ENCODE measurements at regions of chr19 and their contacts with region 1.

Region 1: DNA sequence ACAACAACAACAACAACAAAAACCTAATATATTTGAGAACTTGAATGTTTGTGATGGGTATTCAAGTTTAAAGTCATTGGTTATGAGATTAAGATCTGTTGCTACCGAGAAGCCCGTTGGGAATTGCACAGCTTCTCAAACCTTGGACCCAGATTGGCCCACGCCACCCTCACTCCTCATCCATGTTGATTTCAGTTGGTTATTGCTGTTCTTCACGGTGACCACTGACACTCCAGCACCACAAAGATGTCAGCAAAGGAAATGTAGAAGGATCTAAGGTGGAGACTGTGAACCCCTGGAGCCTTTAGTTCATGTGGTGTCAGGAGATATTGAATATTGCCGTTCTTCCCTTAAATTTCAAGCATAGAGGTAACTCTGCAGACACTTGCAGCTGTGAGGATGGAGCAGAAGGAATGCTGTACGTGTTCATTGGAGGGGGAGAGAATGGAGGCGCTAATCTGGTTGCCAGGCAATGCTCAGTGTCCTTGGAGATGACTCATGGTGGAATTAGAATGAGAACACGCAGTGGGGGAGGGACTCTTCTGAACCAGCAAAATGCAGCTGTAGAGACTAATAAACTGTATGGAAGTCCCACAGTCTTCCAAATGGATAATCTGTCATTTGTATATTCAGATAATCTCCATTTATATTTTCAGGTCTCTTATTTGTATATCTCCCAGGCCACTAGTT is 20.8 kb upstream of the ZNF835 start:
- DNase-seq: peak in 9 of 10 donors; percentile 24 to 91 (median 69)
- H3K4me3 ChIP-seq: peak overlapping the region in 8 of 59 donors; percentile 1 to 22 (median 14)
- H3K27ac ChIP-seq: peak overlapping the region in 19 of 59 donors; percentile 3 to 92 (median 84)
- H3K27me3 ChIP-seq: no peaks in the 10 kb centered on the region
- CTCF ChIP-seq: peak in 14 of 56 donors; percentile 5 to 33 (median 18)

Region 2: DNA sequence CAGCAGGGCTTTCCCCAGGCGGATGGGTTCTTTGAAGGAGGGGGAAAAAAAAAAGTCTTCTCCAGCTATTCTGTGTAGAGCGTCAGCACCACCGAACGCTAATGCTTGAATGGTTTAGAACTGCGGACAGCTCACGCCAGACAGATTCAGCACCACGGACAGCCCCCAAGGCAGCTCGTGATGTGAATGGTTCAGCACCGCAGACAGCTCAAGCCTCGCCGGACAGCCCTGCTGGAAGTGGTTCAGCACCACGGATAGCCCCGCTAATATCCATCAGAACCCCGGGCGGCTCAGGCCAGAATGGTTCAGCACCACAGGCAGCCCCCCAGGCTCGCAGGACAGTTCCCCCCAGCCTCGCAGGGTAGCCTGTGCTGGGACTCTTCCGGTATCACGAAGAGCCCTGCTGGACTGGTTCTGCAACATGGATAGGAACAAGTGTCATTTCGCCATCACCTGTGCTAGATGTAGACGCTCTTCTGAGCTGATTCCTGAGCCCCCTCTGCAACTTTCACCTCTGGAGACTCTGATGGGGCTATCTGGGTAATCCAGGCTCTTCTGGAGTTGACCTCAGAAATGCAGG is 54.3 kb before region 1 on chr19:
- intact Hi-C with region 1: no loop called
- DNase-seq: peak in 8 of 10 donors; percentile 42 to 76 (median 62)
- H3K4me3 ChIP-seq: no peak overlapping the region
- H3K27ac ChIP-seq: no peak overlapping the region
- H3K27me3 ChIP-seq: peaks cover 0 to 4% (median 0%) of the 10 kb centered on the region in 45 donors
- CTCF ChIP-seq: no peak

Region 3: GRCh38 chr19:56718231-56718630 is 25.9 kb after region 1 on chr19:
- intact Hi-C with region 1: loop called in 1 of 2 experiments (anchors 2 kb)
- DNase-seq: no peak
- H3K4me3 ChIP-seq: no peak overlapping the region
- H3K27ac ChIP-seq: peak overlapping the region in 8 of 59 donors; percentile 16 to 92 (median 82)
- H3K27me3 ChIP-seq: no peaks in the 10 kb centered on the region
- CTCF ChIP-seq: no peak

Measured in dorsolateral prefrontal cortex (tissue), 120 donors.